ENCODE measurements at regions of chr1 and their contacts with region 1.

Region 1: GRCh38 chr1:160567858-160568682 is 11.2 kb downstream of the CD84 start:
- DNase-seq: peak; percentile 22
- H3K4me3 ChIP-seq: no peak overlapping the region
- H3K27ac ChIP-seq: peak overlapping the region in 3 of 4 donors; percentile 15 to 45 (median 43)
- H3K4me1 ChIP-seq: no peaks in the 10 kb centered on the region
- H3K27me3 ChIP-seq: no peaks in the 10 kb centered on the region
- CTCF ChIP-seq: no peak
- EP300 ChIP-seq: no peak
- POLR2A ChIP-seq: no peak

Region 2: GRCh38 chr1:160496334-160496733 is 71.7 kb before region 1 on chr1:
- in situ Hi-C with region 1: no loop called
- intact Hi-C with region 1: loop called (anchors 2 kb)
- DNase-seq: no peak
- H3K4me3 ChIP-seq: no peak overlapping the region
- H3K27ac ChIP-seq: no peak overlapping the region
- H3K4me1 ChIP-seq: no peaks in the 10 kb centered on the region
- H3K27me3 ChIP-seq: no peaks in the 10 kb centered on the region
- CTCF ChIP-seq: no peak
- EP300 ChIP-seq: no peak
- POLR2A ChIP-seq: no peak